Activated CD8-positive, alpha-beta memory T cell treated with anti-CD3 and anti-CD28 coated beads, Interleukin-2, amount 10 ng/mL, durations not matched to agents 7 days and 5 days (primary cell): ENCODE measurements at regions of chr3 and their contacts with region 1.

Region 1: GRCh38 chr3:4978204-4978965 is 852 bp upstream of the BHLHE40 start:
- DNase-seq: peak; percentile 97
- ATAC-seq: peak; percentile 59
- H3K4me3 Mint-ChIP-seq: peak overlapping the region; percentile 93
- H3K27ac Mint-ChIP-seq: peak overlapping the region; percentile 99
- H3K4me1 Mint-ChIP-seq: peaks cover 40% of the 10 kb centered on the region
- H3K27me3 Mint-ChIP-seq: no peaks in the 10 kb centered on the region

Region 2: GRCh38 chr3:4720279-4721075 is 257.9 kb before region 1 on chr3:
- CTCF ChIA-PET with region 1: interaction called, 14 read pairs
- DNase-seq: no peak
- ATAC-seq: peak; percentile 54
- H3K4me3 Mint-ChIP-seq: no peak overlapping the region
- H3K27ac Mint-ChIP-seq: peak overlapping the region; percentile 12
- H3K4me1 Mint-ChIP-seq: peaks cover 53% of the 10 kb centered on the region
- H3K27me3 Mint-ChIP-seq: no peaks in the 10 kb centered on the region

Region 3: DNA sequence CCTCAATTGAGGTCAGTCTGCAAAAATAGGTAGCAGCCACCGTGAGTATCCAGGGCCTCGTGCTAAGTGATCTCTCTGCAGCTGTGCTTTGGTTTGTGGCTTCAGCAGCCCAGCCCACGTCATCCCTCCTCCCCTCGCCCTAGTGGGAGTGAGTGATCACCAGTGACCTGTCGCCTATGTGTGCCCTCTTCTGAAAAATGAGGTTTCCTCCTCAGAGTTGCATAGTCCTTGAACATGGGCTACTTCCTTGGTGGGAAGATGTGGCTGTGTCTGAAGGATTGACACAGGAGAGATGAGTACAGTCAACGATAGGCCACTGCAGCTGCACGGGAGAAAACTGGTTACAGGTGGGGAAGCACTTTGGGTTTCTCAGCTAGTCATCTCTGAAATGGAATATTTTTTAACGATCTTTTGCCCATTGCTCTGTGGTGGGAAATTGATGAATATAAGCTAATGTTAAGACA is 143.9 kb before region 1 on chr3:
- CTCF ChIA-PET with region 1: interaction called, 36 read pairs
- DNase-seq: peak; percentile 95
- ATAC-seq: peak; percentile 63
- H3K4me3 Mint-ChIP-seq: peak overlapping the region; percentile 71
- H3K27ac Mint-ChIP-seq: peak overlapping the region; percentile 97
- H3K4me1 Mint-ChIP-seq: peaks cover 89% of the 10 kb centered on the region
- H3K27me3 Mint-ChIP-seq: no peaks in the 10 kb centered on the region

Region 4: DNA sequence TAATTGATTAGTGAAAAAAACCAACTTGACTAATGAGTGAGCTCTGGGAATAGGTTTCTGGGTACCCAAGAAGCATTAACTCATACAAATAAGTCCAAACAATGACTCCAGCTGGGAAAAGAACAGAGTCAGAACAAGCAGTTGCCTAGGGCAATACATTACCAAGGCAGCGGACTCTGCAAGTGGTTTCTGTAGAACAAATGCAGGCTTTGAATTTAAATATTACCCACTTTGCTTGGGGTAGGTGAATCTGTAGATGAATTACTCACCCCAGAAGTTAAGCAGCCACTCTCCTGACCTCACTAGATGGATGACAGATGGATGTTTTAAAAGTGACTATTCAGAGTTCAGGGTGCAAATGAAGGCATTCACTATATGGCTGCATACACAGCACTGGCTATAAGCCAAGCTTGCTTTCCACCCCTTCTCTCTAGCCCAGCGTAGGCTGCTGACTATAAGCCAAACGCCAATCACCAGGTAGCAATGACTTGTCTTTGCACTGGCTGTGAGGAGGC is 72.2 kb before region 1 on chr3:
- CTCF ChIA-PET with region 1: interaction called, 20 read pairs
- DNase-seq: no peak
- ATAC-seq: peak; percentile 66
- H3K4me3 Mint-ChIP-seq: no peak overlapping the region
- H3K27ac Mint-ChIP-seq: peak overlapping the region; percentile 62
- H3K4me1 Mint-ChIP-seq: peaks cover 72% of the 10 kb centered on the region
- H3K27me3 Mint-ChIP-seq: no peaks in the 10 kb centered on the region

Region 5: DNA sequence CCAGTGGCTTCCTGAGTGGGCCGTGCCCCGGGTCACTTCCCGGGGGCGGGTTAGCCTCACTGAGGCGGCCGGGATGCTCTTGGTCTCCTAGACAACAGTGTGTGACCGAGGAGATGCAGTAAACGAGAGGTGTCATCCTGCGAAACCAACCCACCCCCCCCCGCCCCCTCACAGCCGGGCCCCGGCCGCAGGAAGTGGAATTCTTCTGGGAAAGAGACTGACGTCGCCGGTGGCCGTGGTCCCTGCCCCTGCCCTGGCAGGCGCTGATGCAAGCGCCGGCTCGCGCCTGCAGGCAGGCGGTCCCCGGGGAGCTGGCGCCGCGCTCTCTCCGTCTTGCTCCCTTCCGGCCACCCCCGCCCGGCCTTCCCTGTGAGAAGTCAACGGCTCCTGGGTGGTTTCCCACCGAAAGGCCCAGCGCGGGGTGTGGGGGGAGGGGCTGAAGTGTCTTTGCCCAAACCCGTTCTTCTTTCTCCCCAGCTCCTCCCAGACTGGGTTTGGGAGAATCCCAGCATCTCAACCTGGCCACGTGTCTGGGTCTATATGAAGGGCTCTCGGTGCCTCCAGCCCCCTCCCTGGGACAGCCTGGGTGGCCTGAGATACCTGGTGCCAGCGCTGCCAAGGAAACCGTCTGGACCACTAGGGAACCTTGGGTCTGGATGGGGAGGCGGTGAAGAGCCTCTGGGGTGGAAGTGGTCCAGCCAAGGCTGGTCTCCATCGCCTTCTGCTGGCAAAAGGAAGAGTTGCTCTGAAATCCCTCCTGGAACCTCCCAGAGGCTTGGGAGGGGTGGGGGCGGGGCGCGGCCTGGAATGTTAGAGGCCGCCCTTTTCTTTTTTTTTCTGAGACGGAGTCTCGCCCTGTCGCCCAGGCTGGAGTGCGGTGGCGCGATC is 48.2 kb after region 1 on chr3:
- CTCF ChIA-PET with region 1: interaction called, 212 read pairs
- DNase-seq: peak; percentile 85
- ATAC-seq: peak; percentile 70
- H3K4me3 Mint-ChIP-seq: peak overlapping the region; percentile 74
- H3K27ac Mint-ChIP-seq: peak overlapping the region; percentile 87
- H3K4me1 Mint-ChIP-seq: peaks cover 64% of the 10 kb centered on the region
- H3K27me3 Mint-ChIP-seq: no peaks in the 10 kb centered on the region

Region 6: DNA sequence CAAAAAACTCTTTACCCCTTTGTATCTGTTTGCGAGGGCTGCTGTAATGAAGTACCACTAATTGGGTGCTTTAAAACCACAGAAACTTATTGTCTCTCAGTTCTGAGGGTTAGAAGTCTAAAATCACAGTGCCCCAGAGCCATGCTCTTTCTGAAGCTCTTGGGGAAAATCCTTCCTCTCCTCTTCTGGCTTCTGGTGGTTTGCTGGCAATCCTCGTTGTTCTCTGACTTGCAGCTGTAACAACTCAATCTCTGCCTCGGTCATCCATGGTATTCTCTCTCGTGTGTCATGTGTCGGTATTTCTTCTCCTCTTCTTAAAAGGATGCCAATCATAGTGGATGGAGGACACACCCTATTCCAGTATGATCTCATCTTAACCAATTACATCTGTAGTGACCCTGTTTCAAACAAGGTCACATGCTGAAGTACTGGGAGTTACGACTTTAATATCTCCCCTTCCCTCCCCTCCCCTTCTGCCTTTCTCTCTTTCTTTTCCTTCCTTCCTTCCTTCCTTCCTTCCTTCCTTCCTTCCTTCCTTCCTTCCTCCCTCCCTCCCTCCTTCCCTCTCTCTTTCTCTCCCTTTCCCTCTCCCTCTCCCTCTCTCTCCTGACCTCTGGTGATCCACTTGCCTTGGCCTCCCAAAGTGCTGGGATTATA is 137.2 kb after region 1 on chr3:
- CTCF ChIA-PET with region 1: no interaction called
- DNase-seq: no peak
- ATAC-seq: no peak
- H3K4me3 Mint-ChIP-seq: no peak overlapping the region
- H3K27ac Mint-ChIP-seq: no peak overlapping the region
- H3K4me1 Mint-ChIP-seq: peaks cover 5% of the 10 kb centered on the region
- H3K27me3 Mint-ChIP-seq: no peaks in the 10 kb centered on the region